ENCODE measurements at regions of chr4 and their contacts with region 1.

Region 1: GRCh38 chr4:931960-932712 is at the starts of genes GAK and TMEM175:
- DNase-seq: peak; percentile 98
- H3K4me3 ChIP-seq: peak within 1 kb of the TSS; percentile 82 to 83 (median 82)
- H3K27ac ChIP-seq: peak within 1 kb of the TSS; percentile 71
- H3K4me1 ChIP-seq: peaks cover 9% of the 10 kb centered on the region
- H3K27me3 ChIP-seq: no peaks in the 10 kb centered on the region
- CTCF ChIP-seq: no peak
- POLR2A ChIP-seq: peak; percentile 92
- total RNA-seq, gene GAK: 109 and 110 TPM in 2 replicates
- total RNA-seq, gene TMEM175: 16.5 and 21.9 TPM in 2 replicates

Region 2: DNA sequence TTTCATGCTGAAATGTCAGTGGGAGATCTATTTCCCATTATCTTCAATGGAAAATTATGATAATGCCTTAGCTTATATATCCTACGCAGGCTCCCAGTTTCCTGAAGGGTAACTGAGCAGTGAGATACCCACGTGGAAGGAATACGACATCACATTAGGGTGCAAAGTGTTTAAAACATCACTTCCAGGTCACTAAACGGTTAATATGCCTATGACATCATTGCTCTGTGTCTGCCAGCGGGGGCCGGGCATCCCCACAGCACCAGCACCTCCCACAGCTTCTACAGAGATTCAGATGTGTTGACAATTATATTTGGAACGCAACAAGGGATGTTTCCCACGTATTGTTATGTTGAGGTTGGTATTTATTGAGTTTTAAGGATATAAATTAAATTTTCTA is 383.2 kb before region 1 on chr4:
- CTCF ChIA-PET with region 1: no interaction called
- POLR2A ChIA-PET with region 1: no interaction called
- dilution Hi-C with region 1: no loop called
- intact Hi-C with region 1: no loop called
- DNase-seq: no peak
- H3K4me3 ChIP-seq: no peak overlapping the region
- H3K27ac ChIP-seq: no peak overlapping the region
- H3K4me1 ChIP-seq: no peaks in the 10 kb centered on the region
- H3K27me3 ChIP-seq: no peaks in the 10 kb centered on the region
- CTCF ChIP-seq: no peak
- POLR2A ChIP-seq: no peak

Region 3: GRCh38 chr4:748461-748860 is 183.7 kb before region 1 on chr4:
- CTCF ChIA-PET with region 1: no interaction called
- POLR2A ChIA-PET with region 1: no interaction called
- dilution Hi-C with region 1: no loop called
- intact Hi-C with region 1: no loop called
- DNase-seq: no peak
- H3K4me3 ChIP-seq: no peak overlapping the region
- H3K27ac ChIP-seq: no peak overlapping the region
- H3K4me1 ChIP-seq: peaks cover 11% of the 10 kb centered on the region
- H3K27me3 ChIP-seq: no peaks in the 10 kb centered on the region
- CTCF ChIP-seq: no peak
- POLR2A ChIP-seq: no peak

Region 4: GRCh38 chr4:973431-974397 is 41.6 kb after region 1 on chr4 and contains the start of gene DGKQ:
- CTCF ChIA-PET with region 1: no interaction called
- POLR2A ChIA-PET with region 1: no interaction called
- dilution Hi-C with region 1: no loop called
- intact Hi-C with region 1: loop called (anchors 1 kb)
- DNase-seq: peak; percentile 82
- H3K4me3 ChIP-seq: peak within 1 kb of the TSS; percentile 62 to 95 (median 87)
- H3K27ac ChIP-seq: no peak within 1 kb of the TSS
- H3K4me1 ChIP-seq: peaks cover 11% of the 10 kb centered on the region
- H3K27me3 ChIP-seq: no peaks in the 10 kb centered on the region
- CTCF ChIP-seq: no peak
- POLR2A ChIP-seq: no peak
- total RNA-seq, gene DGKQ: 20.2 and 20.4 TPM in 2 replicates